ENCODE measurements at regions of chr10 and their contacts with region 1.

Region 1: GRCh38 chr10:103859161-103860086 is 4.0 kb upstream of the SH3PXD2A start:
- DNase-seq: peak; percentile 20 to 57 (median 36)
- ATAC-seq: peak; percentile 95
- H3K4me3 ChIP-seq: no peak overlapping the region
- H3K27ac ChIP-seq: no peak overlapping the region
- H3K4me1 ChIP-seq: peaks cover 0 to 7% of the 10 kb centered on the region in 2 experiments; a peak in 1 of 5 replicates
- H3K27me3 ChIP-seq: peaks cover under 1 to 14% of the 10 kb centered on the region in 2 experiments
- CTCF ChIP-seq: peak; percentile 53 to 69 (median 67)
- EP300 ChIP-seq: no peak
- POLR2A ChIP-seq: no peak
- RAD21 ChIP-seq: peak; percentile 69 to 80

Region 2: DNA sequence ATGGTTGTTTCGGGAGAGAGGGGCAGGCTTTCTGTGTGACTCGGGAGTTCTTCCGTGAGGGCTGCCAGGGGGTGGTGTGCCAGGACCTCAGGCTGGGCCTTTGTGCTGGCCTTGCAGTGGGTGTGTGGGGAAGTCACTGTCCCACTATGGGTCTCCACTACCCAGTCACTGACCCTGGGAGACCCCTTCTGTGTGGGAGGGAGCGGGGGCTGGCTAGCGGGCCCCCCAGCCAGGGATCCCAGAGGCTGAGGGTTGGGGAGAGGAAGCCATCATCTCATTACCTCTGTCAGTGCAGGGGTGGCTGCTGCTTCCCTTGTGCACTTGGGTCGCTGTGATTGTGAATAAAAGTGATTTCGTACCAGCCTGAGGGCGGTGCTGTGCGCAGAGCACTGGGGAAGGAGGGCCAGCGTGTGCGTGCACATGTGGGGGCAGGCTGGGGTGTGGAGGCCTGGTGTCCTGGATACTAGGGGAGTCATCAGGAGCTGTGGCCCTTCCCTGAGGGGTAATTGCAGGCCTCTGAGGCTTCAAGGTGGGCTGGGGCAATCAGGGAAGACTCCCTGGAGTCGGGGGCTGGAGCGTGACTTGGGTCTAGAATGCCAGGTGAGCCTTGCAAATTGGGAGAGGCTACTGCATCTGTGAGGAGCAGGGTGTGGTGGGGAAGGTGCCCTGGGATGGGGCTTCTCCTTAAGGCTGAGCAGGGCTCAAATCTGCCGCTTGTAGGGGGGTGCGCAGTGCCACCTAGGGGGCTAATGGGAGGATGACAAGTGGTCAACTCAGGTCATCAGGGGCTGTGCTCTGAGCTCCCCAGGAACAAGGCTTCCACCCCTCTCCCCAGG is 267.0 kb before region 1 on chr10:
- CTCF ChIA-PET with region 1: interaction called, 3 read pairs
- POLR2A ChIA-PET with region 1: no interaction called
- in situ Hi-C with region 1: loop called (anchors 25 kb)
- intact Hi-C with region 1: loop called (anchors 5 kb)
- DNase-seq: peak; percentile 61 to 80 (median 80)
- ATAC-seq: peak; percentile 97
- H3K4me3 ChIP-seq: no peak overlapping the region
- H3K27ac ChIP-seq: no peak overlapping the region
- H3K4me1 ChIP-seq: no peaks in the 10 kb centered on the region; a peak in 2 of 5 replicates
- H3K27me3 ChIP-seq: no peaks in the 10 kb centered on the region
- CTCF ChIP-seq: peak; percentile 70 to 77 (median 75)
- EP300 ChIP-seq: no peak
- POLR2A ChIP-seq: no peak
- RAD21 ChIP-seq: peak; percentile 39 to 70; a peak in 3 of 4 replicates

Region 3: GRCh38 chr10:103598654-103599115 is 260.7 kb before region 1 on chr10:
- CTCF ChIA-PET with region 1: no interaction called
- POLR2A ChIA-PET with region 1: no interaction called
- in situ Hi-C with region 1: loop called (anchors 25 kb)
- intact Hi-C with region 1: loop called (anchors 5 kb)
- DNase-seq: peak; percentile 62 to 70 (median 66)
- ATAC-seq: peak; percentile 95
- H3K4me3 ChIP-seq: no peak overlapping the region
- H3K27ac ChIP-seq: no peak overlapping the region
- H3K4me1 ChIP-seq: no peaks in the 10 kb centered on the region; a peak in 1 of 5 replicates
- H3K27me3 ChIP-seq: no peaks in the 10 kb centered on the region
- CTCF ChIP-seq: peak; percentile 59 to 78 (median 75)
- EP300 ChIP-seq: no peak
- POLR2A ChIP-seq: no peak
- RAD21 ChIP-seq: peak; percentile 79 to 83

Region 4: GRCh38 chr10:103712570-103713498 is 146.6 kb before region 1 on chr10:
- CTCF ChIA-PET with region 1: interaction called, 45 read pairs
- POLR2A ChIA-PET with region 1: no interaction called
- in situ Hi-C with region 1: no loop called
- intact Hi-C with region 1: loop called (anchors 1 kb)
- DNase-seq: peak; percentile 56 to 75 (median 62)
- ATAC-seq: peak; percentile 93
- H3K4me3 ChIP-seq: no peak overlapping the region
- H3K27ac ChIP-seq: no peak overlapping the region
- H3K4me1 ChIP-seq: no peaks in the 10 kb centered on the region; a peak in 1 of 5 replicates
- H3K27me3 ChIP-seq: peaks cover 0 to 20% of the 10 kb centered on the region in 2 experiments; a peak in 1 of 5 replicates
- CTCF ChIP-seq: peak; percentile 79 to 87 (median 85)
- EP300 ChIP-seq: no peak
- POLR2A ChIP-seq: no peak
- RAD21 ChIP-seq: peak; percentile 87 to 90

Region 5: DNA sequence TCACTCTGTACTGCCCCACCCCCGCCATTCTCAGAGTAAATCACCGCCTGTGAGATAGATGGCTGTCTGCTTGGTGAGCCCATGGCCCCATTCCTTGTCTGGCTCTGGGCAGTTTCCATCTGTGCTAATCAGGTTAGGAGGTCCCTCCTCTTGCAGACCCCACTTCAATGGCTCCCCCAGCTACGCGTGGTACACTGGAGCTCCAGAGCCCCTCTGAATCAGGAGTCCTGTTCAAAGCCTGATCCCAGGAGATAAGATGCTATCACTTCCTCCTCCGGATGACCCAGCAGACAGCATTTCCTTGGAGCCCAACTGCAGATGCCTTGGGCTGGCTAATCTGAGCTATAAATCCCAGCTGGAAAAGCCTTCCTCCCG is 126.4 kb before region 1 on chr10:
- CTCF ChIA-PET with region 1: no interaction called
- POLR2A ChIA-PET with region 1: no interaction called
- in situ Hi-C with region 1: no loop called
- intact Hi-C with region 1: loop called (anchors 5 kb)
- DNase-seq: no peak
- ATAC-seq: no peak
- H3K4me3 ChIP-seq: no peak overlapping the region
- H3K27ac ChIP-seq: no peak overlapping the region
- H3K4me1 ChIP-seq: no peaks in the 10 kb centered on the region
- H3K27me3 ChIP-seq: peaks cover 11 to 52% of the 10 kb centered on the region in 2 experiments; a peak in 4 of 5 replicates
- CTCF ChIP-seq: no peak
- EP300 ChIP-seq: no peak
- POLR2A ChIP-seq: no peak
- RAD21 ChIP-seq: no peak